Ascending aorta (tissue), 2 donors: ENCODE measurements at regions of chr4 and their contacts with region 1.

Region 1: GRCh38 chr4:55395529-55396307 is at the start of gene TMEM165:
- DNase-seq: peak; percentile 71 to 95
- H3K4me3 ChIP-seq: peak within 1 kb of the TSS; percentile 97 to 98
- H3K27ac ChIP-seq: peak within 1 kb of the TSS; percentile 99 to 100
- H3K4me1 ChIP-seq: peaks cover 0 to 9% of the 10 kb centered on the region in 2 donors
- H3K27me3 ChIP-seq: no peaks in the 10 kb centered on the region
- CTCF ChIP-seq: no peak
- total RNA-seq, gene TMEM165: 178 TPM

Region 2: GRCh38 chr4:54277691-54278090 is 1118.0 kb before region 1 on chr4:
- intact Hi-C with region 1: loop called (anchors 5 kb)
- DNase-seq: peak; percentile 11 to 81
- H3K4me3 ChIP-seq: no peak overlapping the region
- H3K27ac ChIP-seq: peak overlapping the region; percentile 80 to 81
- H3K4me1 ChIP-seq: peaks cover 14 to 55% of the 10 kb centered on the region in 2 donors
- H3K27me3 ChIP-seq: no peaks in the 10 kb centered on the region
- CTCF ChIP-seq: no peak

Region 3: DNA sequence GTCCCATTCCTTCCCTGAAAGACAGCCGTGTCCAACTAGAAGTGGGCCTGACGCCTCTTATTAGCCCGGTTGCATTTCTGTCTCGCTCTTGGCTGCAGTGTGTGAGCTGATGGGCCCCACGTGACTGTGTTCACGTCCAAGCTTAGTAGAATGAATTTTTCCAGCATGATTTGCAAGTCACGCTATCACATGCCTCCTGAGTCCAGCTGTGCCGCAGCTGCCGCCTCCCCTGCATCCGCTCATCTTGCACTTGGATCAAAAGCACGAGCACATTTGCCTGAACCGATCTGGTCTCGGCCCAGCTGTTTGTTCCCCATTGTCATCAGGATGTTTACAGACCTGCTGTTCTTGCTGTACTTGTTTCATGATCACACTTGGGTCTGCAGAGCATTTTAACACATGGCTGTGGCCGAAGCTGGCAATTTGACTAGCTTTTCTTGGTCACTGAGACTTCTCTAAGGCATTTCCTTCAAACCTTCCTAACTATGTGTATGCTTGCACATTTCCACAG is 611.5 kb before region 1 on chr4:
- intact Hi-C with region 1: loop called (anchors 1 kb)
- DNase-seq: peak; percentile 76 to 95
- H3K4me3 ChIP-seq: peak overlapping the region in 1 of 2 donors; percentile 37
- H3K27ac ChIP-seq: peak overlapping the region; percentile 77 to 83
- H3K4me1 ChIP-seq: peaks cover 0 to 26% of the 10 kb centered on the region in 2 donors
- H3K27me3 ChIP-seq: no peaks in the 10 kb centered on the region
- CTCF ChIP-seq: no peak

Region 4: DNA sequence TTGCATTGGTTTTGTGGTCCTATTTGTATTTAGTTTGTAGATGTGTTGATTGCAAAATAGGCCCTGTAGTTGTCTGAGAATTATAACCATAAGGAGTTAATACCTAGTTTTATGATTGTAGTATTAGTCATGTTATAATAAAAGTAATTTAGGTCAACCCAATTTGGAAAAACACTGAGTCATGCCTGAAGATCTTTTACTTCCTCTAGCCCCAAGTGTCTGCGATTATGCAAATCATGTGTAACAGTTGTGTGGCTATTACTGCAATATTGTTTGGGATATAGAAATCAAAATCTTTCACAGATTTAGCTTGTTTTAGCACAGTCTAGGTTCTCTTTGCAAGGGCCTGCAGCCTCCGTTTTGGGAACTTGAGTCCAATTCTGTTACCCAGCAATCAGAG is 37.0 kb before region 1 on chr4:
- intact Hi-C with region 1: loop called (anchors 1 kb)
- DNase-seq: no peak
- H3K4me3 ChIP-seq: peak overlapping the region in 1 of 2 donors; percentile 41
- H3K27ac ChIP-seq: peak overlapping the region; percentile 80 to 86
- H3K4me1 ChIP-seq: peaks cover 0 to 22% of the 10 kb centered on the region in 2 donors
- H3K27me3 ChIP-seq: no peaks in the 10 kb centered on the region
- CTCF ChIP-seq: no peak

Region 5: DNA sequence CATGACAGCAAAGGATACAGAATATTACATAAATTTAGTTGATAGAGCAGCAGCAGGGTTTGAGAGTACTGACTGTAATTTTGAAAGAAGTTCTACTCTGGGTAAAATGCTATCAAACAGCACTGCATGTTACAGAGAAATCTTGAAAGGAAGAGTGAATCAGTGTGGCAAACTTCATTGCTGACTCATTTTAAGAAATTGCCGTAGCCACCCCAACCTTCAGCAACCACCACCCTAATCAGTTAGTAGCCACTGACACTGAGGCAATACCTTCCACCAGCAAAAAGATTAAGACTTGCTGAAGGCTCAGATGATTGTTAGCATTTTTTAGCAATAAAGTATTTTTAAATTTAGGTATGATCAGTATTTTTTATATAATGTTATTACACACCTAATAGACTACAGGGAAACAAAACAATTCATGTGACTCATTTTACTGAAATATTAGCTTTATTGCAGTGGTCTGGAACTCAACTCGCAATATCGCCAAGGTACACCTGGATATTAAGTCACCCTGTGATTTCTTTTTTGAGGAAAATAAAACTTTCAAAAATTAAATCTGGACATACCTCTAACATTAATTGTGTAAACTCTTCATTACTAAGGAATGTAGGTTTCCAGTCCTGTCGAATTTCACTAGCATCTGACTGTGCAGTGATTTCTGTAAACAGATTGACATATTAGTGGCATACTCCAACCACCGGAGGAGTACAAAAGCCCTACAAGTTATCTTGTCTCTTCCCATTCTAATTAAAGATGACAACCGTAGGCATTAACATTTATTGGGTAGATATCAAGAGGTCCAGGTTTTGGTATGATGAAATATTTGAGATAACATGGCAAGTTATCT is 79.9 kb after region 1 on chr4:
- intact Hi-C with region 1: no loop called
- DNase-seq: no peak
- H3K4me3 ChIP-seq: no peak overlapping the region
- H3K27ac ChIP-seq: no peak overlapping the region
- H3K4me1 ChIP-seq: no peaks in the 10 kb centered on the region
- H3K27me3 ChIP-seq: no peaks in the 10 kb centered on the region
- CTCF ChIP-seq: no peak

Region 6: DNA sequence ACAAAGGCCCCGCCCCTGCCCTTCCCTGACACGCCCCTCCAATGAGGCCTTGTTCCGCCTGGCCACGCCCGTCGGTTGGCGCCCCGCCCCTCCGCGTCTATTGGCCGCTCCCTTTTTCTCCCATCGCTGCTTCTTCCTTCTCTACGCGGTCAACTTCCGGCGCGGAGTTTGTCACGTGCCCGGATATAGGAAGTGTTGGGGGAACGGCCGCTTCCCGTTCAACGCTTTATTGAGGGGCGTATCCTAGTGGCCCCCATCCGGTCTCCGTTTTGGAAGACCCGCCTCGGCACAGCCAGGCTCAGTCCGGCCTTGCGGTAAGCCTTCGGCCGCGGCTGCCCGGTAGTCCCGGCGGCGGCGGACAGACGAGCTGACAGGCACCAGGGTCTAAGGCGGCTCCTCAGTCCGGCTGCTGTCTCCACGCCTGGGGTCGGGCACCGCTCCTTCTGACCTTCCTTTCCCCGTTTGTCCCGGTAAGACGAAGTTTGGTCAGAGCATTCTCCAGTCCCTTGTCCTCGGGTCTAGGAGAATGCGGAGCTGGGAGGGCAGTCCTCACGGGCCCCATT is 457.8 kb after region 1 on chr4 and contains the start of gene EXOC1:
- intact Hi-C with region 1: loop called (anchors 1 kb)
- DNase-seq: peak; percentile 95 to 99
- H3K4me3 ChIP-seq: peak within 1 kb of the TSS; percentile 90 to 93
- H3K27ac ChIP-seq: peak within 1 kb of the TSS; percentile 87 to 96
- H3K4me1 ChIP-seq: peaks cover 0 to 7% of the 10 kb centered on the region in 2 donors
- H3K27me3 ChIP-seq: no peaks in the 10 kb centered on the region
- CTCF ChIP-seq: no peak
- total RNA-seq, gene EXOC1: 13.6 TPM

Region 7: DNA sequence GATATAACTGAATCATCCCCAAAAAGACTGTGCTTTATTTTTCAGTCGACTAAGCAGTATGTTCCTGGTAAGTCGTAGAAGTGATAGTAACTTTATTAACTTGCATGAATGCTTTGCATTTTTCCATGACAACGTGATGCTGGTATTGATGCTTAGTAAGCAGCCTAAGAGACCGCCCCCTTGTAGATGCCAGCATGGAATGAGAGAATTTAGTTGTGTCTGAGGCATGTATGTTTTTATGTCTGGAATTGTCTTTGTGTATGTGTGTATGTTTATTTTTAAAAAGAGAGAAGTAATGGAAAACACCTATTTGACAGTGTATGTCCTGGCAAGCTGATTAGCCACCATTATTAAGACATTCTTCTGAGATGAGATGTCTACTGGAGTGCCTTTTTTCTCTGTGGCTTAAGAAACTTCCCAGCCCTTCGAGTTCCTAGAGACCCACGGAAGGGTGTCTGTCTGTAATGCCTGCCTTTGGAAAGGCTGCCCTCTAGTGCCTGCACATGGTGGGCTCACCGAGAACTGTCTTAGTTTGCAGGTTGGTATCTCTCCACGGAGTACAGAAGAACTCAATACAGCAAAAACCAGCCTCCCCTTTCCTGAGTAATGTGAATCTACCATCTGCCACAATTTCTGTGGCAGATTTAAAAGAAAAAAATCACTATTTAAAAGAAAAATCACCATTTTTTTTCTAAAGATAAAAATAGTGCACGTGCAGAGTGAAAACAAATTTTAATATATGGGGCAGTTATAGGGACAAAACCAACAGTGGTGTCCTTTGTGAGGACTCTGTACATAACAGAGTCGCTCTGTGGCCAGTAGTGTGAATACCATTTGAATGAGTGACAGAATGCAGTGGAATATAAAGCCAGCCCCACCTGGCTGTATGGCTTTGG is 905.7 kb after region 1 on chr4:
- intact Hi-C with region 1: loop called (anchors 5 kb)
- DNase-seq: peak in 1 of 2 donors; percentile 78
- H3K4me3 ChIP-seq: peak overlapping the region in 1 of 2 donors; percentile 32
- H3K27ac ChIP-seq: no peak overlapping the region
- H3K4me1 ChIP-seq: no peaks in the 10 kb centered on the region
- H3K27me3 ChIP-seq: no peaks in the 10 kb centered on the region
- CTCF ChIP-seq: peak; percentile 44 to 78 (median 66)

Region 8: DNA sequence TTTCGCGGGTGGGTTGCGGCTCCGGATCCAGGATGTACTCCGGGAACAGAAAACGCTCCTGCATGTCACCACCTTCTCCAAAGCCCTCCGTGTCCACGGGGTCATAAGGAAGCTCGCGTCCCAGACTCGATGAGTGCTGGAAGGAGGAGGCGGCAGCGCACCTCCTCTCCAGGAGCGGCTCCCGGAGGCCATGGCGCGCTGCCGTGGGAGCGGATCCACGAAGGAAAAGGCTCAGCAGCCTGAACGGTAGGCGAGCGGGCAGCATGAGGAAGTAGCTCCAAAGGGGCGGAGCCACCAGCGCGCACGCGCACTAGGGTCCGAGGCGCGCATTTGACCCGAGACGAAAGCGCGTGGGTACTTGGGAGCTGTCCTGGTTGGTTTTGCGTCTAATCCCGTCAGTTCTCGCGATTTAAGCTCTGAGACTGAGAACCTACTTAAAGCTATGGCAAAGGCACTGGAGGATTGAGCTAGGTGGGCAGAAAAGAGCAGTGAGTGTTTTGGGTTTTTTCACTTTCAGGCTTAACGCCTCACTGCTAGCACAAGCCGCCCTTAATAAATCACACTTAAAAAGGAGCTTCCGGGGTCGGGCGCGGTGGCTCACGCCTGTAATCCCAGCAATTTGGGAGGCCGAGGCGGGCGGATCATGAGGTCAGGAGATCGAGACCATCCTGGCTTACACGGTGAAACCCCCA is 1581.7 kb after region 1 on chr4 and contains the start of gene NOA1:
- intact Hi-C with region 1: loop called (anchors 5 kb)
- DNase-seq: peak; percentile 98 to 100
- H3K4me3 ChIP-seq: peak within 1 kb of the TSS; percentile 84 to 91
- H3K27ac ChIP-seq: peak within 1 kb of the TSS; percentile 90 to 94
- H3K4me1 ChIP-seq: peaks cover 5 to 19% of the 10 kb centered on the region in 2 donors
- H3K27me3 ChIP-seq: no peaks in the 10 kb centered on the region
- CTCF ChIP-seq: no peak
- total RNA-seq, gene NOA1: 36.6 TPM